A549 (cell line): ENCODE measurements at regions of chr2 and their contacts with region 1.

Region 1: GRCh38 chr2:53786705-53787612 is at the starts of genes ASB3 and ERLEC1:
- DNase-seq: peak; percentile 75 to 92
- ATAC-seq: peak; percentile 95 to 96
- H3K4me3 ChIP-seq: peak within 1 kb of the TSS; percentile 80
- H3K27ac ChIP-seq: peak within 1 kb of the TSS; percentile 84 to 91
- H3K4me1 ChIP-seq: peaks cover 17% of the 10 kb centered on the region
- CTCF ChIP-seq: no peak
- EP300 ChIP-seq: no peak
- POLR2A ChIP-seq: peak; percentile 80
- RAD21 ChIP-seq: no peak; a peak in 1 of 5 replicates
- polyA plus RNA-seq, gene ASB3: 35.9 and 38.4 TPM in 2 replicates
- polyA plus RNA-seq, gene ERLEC1: 97.4 and 113 TPM in 2 replicates

Region 2: GRCh38 chr2:53750041-53750768 is 36.8 kb before region 1 on chr2:
- CTCF ChIA-PET with region 1: no interaction called
- POLR2A ChIA-PET with region 1: no interaction called
- DNase-seq: no peak
- ATAC-seq: no peak
- H3K4me3 ChIP-seq: no peak overlapping the region
- H3K27ac ChIP-seq: no peak overlapping the region
- H3K4me1 ChIP-seq: peaks cover 11% of the 10 kb centered on the region; the same call in 2 of the 3 replicates
- CTCF ChIP-seq: no peak
- EP300 ChIP-seq: no peak
- POLR2A ChIP-seq: no peak
- RAD21 ChIP-seq: no peak

Region 3: DNA sequence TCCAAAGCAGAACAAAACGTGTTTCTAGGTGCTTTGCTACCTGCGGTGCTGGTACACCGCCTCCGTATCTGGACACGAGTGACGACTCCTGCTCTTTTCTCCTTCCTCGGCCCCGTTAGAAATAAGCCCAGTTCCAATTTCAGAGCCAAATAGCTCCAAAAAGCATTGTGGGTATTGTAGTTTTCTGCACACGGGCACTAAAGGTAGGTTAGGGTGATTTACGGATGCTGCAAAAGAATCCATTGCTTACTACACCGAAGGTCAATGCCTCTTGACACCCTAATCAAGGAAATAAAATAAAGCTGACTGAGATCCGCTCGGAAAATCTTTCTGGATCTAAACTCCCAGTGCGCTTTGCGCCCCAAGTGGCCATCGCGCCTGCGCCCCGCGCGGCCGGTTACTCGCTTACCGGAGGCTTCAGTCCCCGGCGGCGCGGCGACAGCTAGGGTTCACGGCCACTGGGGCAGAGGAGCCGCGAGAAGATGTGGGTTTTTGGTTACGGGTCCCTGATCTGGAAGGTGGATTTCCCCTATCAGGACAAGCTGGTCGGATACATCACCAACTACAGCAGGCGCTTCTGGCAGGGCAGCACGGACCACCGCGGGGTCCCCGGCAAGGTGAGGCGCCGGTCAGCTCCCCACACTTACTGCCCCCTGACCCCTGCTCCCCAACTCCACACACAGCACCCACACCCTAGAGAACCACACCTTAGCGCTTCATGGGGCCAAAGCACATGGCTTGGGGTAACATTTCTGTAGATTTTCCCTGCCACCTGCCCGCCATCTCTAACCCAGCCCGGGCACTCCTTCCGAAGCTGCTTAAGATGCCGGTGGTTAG is 19.3 kb before region 1 on chr2 and contains the start of gene CHAC2:
- CTCF ChIA-PET with region 1: interaction called, 3 read pairs
- POLR2A ChIA-PET with region 1: interaction called, 39 read pairs
- DNase-seq: peak; percentile 83 to 91
- ATAC-seq: peak; percentile 96 to 98
- H3K4me3 ChIP-seq: peak within 1 kb of the TSS; percentile 76
- H3K27ac ChIP-seq: peak within 1 kb of the TSS; percentile 85 to 91
- H3K4me1 ChIP-seq: peaks cover 24% of the 10 kb centered on the region
- CTCF ChIP-seq: no peak; the same call in 2 of the 3 replicates
- EP300 ChIP-seq: no peak
- POLR2A ChIP-seq: peak; percentile 89
- RAD21 ChIP-seq: no peak
- polyA plus RNA-seq, gene CHAC2: 15.2 and 21.8 TPM in 2 replicates